B cell (primary cell): ENCODE measurements at regions of chr11 and their contacts with region 1.

Region 1: DNA sequence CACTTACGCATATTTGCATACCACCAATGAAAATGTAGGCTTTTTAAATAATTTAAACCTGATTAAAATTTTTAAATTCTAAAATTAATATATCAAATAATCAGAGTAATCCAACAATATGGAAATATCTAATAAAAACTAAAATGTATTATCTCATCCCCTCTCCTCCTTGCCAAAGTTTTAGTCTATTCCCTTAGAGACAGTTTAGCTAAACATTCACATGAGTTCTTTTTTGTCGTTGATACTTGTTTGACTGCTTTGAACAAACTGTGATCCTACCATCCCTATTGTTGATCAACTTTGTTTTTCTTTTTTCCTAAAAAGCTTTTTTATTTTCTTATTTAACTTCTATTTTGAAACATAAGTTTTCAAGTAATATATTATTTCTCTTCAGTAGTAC is 81.4 kb upstream of the PARVA start:
- DNase-seq: no peak
- ATAC-seq: no peak
- H3K4me3 ChIP-seq: no peak overlapping the region
- H3K4me3 Mint-ChIP-seq: no peak overlapping the region
- H3K27ac ChIP-seq: no peak overlapping the region
- H3K27ac Mint-ChIP-seq: no peak overlapping the region
- H3K4me1 ChIP-seq: no peaks in the 10 kb centered on the region
- H3K4me1 Mint-ChIP-seq: no peaks in the 10 kb centered on the region
- H3K27me3 ChIP-seq: peaks cover 0 to 3% (median 0%) of the 10 kb centered on the region in 4 experiments
- H3K27me3 Mint-ChIP-seq: peaks cover 4% of the 10 kb centered on the region
- CTCF ChIP-seq: no peak

Region 2: GRCh38 chr11:12281571-12282478 is 14.1 kb before region 1 on chr11:
- CTCF ChIA-PET with region 1: interaction called, 15 read pairs
- POLR2A ChIA-PET with region 1: no interaction called
- intact Hi-C with region 1: no loop called
- DNase-seq: peak; percentile 69
- ATAC-seq: peak; percentile 53
- H3K4me3 ChIP-seq: no peak overlapping the region
- H3K4me3 Mint-ChIP-seq: no peak overlapping the region
- H3K27ac ChIP-seq: no peak overlapping the region
- H3K27ac Mint-ChIP-seq: no peak overlapping the region
- H3K4me1 ChIP-seq: no peaks in the 10 kb centered on the region
- H3K4me1 Mint-ChIP-seq: no peaks in the 10 kb centered on the region
- H3K27me3 ChIP-seq: peaks cover 0 to 3% (median 0%) of the 10 kb centered on the region in 4 experiments
- H3K27me3 Mint-ChIP-seq: peaks cover 5% of the 10 kb centered on the region
- CTCF ChIP-seq: peak; percentile 98

Region 3: DNA sequence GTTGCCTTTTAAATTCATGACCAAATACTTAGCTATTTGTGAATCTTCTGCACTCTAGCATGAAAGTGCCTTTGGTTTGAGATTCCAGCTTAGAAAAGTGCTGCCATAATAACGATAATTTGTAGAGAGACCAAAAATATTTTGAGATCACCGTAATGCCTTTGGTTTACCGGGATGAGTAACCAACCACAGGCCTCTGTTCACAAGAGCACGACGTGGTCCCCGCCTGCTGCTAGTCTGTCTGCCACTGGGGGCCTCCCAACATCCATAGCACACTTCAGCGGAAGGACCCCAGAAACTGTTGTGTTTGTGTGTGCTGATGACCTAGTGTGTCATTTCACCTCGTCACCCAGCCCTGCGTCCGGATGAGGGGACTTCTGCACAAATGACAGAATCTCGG is 646.2 kb after region 1 on chr11:
- CTCF ChIA-PET with region 1: no interaction called
- POLR2A ChIA-PET with region 1: no interaction called
- intact Hi-C with region 1: no loop called
- DNase-seq: no peak
- ATAC-seq: no peak
- H3K4me3 ChIP-seq: no peak overlapping the region
- H3K4me3 Mint-ChIP-seq: no peak overlapping the region
- H3K27ac ChIP-seq: no peak overlapping the region
- H3K27ac Mint-ChIP-seq: no peak overlapping the region
- H3K4me1 ChIP-seq: no peaks in the 10 kb centered on the region
- H3K4me1 Mint-ChIP-seq: no peaks in the 10 kb centered on the region
- H3K27me3 ChIP-seq: no peaks in the 10 kb centered on the region
- H3K27me3 Mint-ChIP-seq: peaks cover 9% of the 10 kb centered on the region
- CTCF ChIP-seq: no peak